CD4-positive, alpha-beta memory T cell (primary cell): ENCODE measurements at regions of chr10 and their contacts with region 1.

Region 1: DNA sequence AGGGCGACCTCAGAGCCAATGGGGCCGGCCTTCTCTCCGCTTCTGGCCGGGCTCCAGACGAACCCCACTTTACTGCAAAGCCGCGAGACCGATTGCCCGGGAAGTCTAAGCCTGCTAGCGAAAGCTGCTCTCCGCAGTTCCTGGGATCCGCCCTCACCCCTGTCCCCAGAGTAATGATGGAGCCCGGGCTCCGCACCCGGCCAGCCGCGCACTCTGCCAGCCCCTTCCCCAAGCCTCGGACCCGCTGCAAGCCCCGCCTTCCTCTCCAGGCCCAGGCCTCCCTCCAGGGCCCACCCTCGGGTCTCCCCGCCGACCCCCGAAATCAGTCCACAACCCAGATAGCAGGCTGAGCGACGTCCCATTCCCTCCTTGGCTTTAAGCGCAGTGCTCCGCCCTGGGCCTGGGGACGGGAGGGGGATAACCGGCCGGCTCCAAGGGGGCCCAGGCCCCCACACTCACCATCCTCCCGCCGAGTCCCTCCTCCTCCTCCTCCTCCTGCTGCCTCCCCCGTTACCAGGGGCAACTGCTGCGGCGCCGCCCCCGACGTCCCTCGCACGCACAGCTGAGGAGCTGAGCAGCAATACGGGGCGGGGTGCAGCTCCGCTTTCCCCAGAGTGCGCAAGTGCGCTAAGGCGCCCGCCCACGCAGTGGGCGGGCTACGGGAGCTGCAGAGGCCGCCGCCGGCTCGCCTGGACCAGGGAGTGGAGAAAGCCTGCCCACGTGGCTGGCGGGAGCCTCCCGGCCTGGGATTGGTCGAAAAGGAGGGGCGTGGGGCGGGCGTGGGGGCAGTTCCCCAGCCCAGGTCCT is at the start of gene ARL3:
- DNase-seq: peak; percentile 89 to 97 (median 92)
- H3K4me3 ChIP-seq: peak within 1 kb of the TSS; percentile 81 to 89
- H3K4me3 Mint-ChIP-seq: peak within 1 kb of the TSS; percentile 90 to 98 (median 96)
- H3K27ac ChIP-seq: peak within 1 kb of the TSS; percentile 94
- H3K27ac Mint-ChIP-seq: peak within 1 kb of the TSS; percentile 90 to 98 (median 96)
- H3K4me1 ChIP-seq: peaks cover 33% of the 10 kb centered on the region
- H3K4me1 Mint-ChIP-seq: peaks cover 34 to 67% (median 41%) of the 10 kb centered on the region in 4 donors
- H3K27me3 ChIP-seq: no peaks in the 10 kb centered on the region
- H3K27me3 Mint-ChIP-seq: no peaks in the 10 kb centered on the region
- total RNA-seq, gene ARL3: 3.7 to 4.0 TPM

Region 2: DNA sequence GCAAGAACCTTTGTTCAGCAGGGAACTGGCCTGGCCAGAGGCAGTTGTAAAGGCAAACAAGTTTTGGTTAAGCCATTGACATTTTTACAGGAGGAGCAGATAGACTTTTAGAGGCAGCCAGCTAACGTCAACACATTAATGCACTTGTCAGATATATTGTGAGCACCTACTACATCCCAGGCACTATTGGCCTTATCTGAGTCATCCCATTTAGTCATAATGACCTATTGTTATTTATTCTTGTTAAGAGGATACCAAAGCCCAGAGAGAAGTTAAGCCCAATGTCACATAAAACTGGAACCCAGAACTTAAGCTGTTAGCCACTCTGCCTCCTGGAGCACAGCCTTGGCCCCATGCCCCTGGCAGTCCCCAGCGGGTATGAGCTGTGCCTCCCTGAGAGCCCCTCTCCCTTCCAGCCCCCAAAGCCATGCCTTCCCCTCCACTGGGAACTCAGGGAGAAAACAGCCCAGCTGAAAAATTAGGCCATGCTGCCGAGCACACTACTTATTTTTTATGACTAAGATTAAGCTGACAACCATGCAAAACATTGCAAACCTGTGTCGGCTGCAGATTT is 102.4 kb before region 1 on chr10:
- CTCF ChIA-PET with region 1: no interaction called
- POLR2A ChIA-PET with region 1: interaction called, 11 read pairs
- intact Hi-C with region 1: no loop called
- DNase-seq: peak in 1 of 5 donors; percentile 20
- H3K4me3 ChIP-seq: no peak overlapping the region
- H3K4me3 Mint-ChIP-seq: peak overlapping the region in 6 of 8 donors; percentile 30 to 72 (median 42)
- H3K27ac ChIP-seq: peak overlapping the region; percentile 27
- H3K27ac Mint-ChIP-seq: peak overlapping the region; percentile 94 to 99 (median 99)
- H3K4me1 ChIP-seq: peaks cover 44% of the 10 kb centered on the region
- H3K4me1 Mint-ChIP-seq: peaks cover 27 to 54% (median 36%) of the 10 kb centered on the region in 4 donors
- H3K27me3 ChIP-seq: no peaks in the 10 kb centered on the region
- H3K27me3 Mint-ChIP-seq: no peaks in the 10 kb centered on the region

Region 3: DNA sequence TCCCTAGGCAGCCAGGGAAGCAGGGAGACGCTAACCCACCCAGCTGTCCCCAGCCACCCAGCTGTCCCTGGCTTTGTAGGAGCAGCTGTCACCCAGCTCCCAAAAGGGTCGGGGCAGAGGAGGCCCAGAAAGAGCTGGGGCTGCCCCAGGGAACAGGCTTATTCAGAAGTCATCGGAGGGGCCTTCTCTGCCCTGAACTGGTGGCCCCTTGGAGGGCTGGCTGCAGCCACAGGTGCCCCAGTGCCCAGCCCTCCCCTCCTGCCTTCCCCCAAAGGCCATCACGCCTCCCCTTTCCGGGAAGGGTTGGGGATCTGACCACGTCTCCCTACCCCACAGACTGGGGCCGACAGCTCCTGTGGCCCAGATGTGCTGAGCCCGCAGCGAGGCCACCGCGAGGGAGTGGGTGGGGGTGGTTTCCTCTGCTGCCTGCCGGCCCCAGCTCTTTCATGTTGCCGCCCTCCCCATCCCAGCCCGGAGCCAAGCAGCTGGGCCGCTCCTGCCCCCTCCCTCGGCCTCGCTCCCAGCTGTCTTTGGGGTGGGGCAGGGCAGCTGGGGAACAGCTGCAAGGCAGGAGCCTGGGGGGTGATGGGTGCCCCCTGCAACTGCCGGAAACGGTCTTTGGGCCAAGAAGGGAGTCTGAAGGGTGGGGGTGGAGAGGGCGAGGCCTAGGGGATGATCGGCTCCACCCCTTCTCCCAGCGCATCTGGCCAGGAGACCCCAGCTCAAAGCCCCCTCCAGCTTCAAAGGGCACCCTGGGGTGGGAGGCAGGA is 52.9 kb before region 1 on chr10:
- CTCF ChIA-PET with region 1: interaction called, 5 read pairs
- POLR2A ChIA-PET with region 1: interaction called, 23 read pairs
- intact Hi-C with region 1: no loop called
- DNase-seq: peak; percentile 50 to 67 (median 60)
- H3K4me3 ChIP-seq: peak overlapping the region in 1 of 2 donors; percentile 27
- H3K4me3 Mint-ChIP-seq: peak overlapping the region; percentile 42 to 87 (median 60)
- H3K27ac ChIP-seq: peak overlapping the region; percentile 48
- H3K27ac Mint-ChIP-seq: peak overlapping the region; percentile 41 to 94 (median 85)
- H3K4me1 ChIP-seq: peaks cover 45% of the 10 kb centered on the region
- H3K4me1 Mint-ChIP-seq: peaks cover 22 to 49% (median 30%) of the 10 kb centered on the region in 4 donors
- H3K27me3 ChIP-seq: no peaks in the 10 kb centered on the region
- H3K27me3 Mint-ChIP-seq: no peaks in the 10 kb centered on the region

Region 4: DNA sequence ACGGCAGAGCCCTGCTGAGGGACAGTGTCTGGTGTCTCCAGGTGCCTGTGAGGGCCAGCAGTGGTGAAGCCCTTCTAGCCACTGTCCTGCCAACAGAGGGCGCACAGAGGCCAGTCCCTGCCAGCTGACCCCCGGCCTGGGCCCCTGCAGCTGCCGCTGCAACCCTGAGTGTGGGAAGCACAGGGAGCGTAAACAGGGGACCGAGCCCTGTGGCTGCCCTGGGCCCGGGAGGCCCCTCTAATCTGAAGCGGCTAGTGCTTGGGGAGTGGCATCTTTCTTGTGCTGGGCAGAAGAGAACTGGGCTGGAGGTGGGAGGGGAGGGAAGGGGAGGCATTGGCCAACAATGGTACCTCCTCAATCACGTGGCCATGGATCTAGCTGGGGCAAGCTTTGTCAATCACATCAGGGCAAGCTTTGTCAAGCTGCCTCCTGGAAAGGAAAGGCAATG is 35.2 kb before region 1 on chr10:
- CTCF ChIA-PET with region 1: interaction called, 22 read pairs
- POLR2A ChIA-PET with region 1: interaction called, 48 read pairs
- intact Hi-C with region 1: loop called (anchors 1 kb)
- DNase-seq: no peak
- H3K4me3 ChIP-seq: no peak overlapping the region
- H3K4me3 Mint-ChIP-seq: no peak overlapping the region
- H3K27ac ChIP-seq: no peak overlapping the region
- H3K27ac Mint-ChIP-seq: peak overlapping the region in 5 of 7 donors; percentile 25 to 83 (median 64)
- H3K4me1 ChIP-seq: peaks cover 41% of the 10 kb centered on the region
- H3K4me1 Mint-ChIP-seq: peaks cover 23 to 57% (median 46%) of the 10 kb centered on the region in 4 donors
- H3K27me3 ChIP-seq: no peaks in the 10 kb centered on the region
- H3K27me3 Mint-ChIP-seq: no peaks in the 10 kb centered on the region

Region 5: DNA sequence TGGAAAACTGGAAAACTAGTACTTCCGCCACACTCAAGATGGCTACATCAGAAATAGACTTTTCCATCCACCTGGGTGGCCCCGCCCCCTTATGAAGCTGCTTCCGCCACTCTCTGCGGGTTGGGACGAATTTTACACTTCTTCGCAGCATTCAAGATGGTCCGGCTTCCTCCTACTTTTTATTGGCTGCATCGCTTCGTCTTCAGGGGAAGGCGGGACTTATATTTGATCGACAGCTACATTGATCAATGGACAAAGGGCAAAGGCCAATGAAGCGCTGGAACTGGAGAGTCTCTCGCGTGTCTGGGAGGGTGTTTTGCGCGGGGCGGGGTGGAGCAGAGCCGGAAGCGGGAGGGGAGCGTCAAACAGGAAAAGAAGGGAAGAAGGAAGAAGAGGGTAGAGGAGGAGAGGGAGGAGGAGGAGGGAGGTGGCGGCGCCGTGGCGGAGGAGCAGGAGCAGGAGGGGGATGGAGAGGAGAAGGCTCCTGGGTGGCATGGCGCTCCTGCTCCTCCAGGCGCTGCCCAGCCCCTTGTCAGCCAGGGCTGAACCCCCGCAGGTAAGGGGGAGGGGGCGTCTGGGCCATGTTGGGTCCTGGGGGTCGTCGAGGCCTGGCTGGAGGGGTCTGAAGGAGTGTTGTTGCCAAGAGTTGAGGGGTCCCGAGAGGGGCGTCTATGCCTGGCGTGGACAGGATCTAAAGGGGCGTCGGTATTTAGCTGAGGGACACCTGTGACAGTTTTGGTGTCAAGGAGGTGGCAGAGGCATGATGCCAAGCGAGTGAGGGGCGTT is 29.8 kb after region 1 on chr10 and contains the start of gene WBP1L:
- CTCF ChIA-PET with region 1: interaction called, 7 read pairs
- POLR2A ChIA-PET with region 1: interaction called, 50 read pairs
- intact Hi-C with region 1: loop called (anchors 1 kb)
- DNase-seq: peak; percentile 95 to 98 (median 97)
- H3K4me3 ChIP-seq: peak within 1 kb of the TSS; percentile 79 to 96
- H3K4me3 Mint-ChIP-seq: peak within 1 kb of the TSS; percentile 90 to 99 (median 96)
- H3K27ac ChIP-seq: peak within 1 kb of the TSS; percentile 81
- H3K27ac Mint-ChIP-seq: peak within 1 kb of the TSS; percentile 69 to 99 (median 94)
- H3K4me1 ChIP-seq: peaks cover 35% of the 10 kb centered on the region
- H3K4me1 Mint-ChIP-seq: peaks cover 33 to 50% (median 42%) of the 10 kb centered on the region in 4 donors
- H3K27me3 ChIP-seq: no peaks in the 10 kb centered on the region
- H3K27me3 Mint-ChIP-seq: no peaks in the 10 kb centered on the region
- total RNA-seq, gene WBP1L: 39.3 to 41.1 TPM

Region 6: DNA sequence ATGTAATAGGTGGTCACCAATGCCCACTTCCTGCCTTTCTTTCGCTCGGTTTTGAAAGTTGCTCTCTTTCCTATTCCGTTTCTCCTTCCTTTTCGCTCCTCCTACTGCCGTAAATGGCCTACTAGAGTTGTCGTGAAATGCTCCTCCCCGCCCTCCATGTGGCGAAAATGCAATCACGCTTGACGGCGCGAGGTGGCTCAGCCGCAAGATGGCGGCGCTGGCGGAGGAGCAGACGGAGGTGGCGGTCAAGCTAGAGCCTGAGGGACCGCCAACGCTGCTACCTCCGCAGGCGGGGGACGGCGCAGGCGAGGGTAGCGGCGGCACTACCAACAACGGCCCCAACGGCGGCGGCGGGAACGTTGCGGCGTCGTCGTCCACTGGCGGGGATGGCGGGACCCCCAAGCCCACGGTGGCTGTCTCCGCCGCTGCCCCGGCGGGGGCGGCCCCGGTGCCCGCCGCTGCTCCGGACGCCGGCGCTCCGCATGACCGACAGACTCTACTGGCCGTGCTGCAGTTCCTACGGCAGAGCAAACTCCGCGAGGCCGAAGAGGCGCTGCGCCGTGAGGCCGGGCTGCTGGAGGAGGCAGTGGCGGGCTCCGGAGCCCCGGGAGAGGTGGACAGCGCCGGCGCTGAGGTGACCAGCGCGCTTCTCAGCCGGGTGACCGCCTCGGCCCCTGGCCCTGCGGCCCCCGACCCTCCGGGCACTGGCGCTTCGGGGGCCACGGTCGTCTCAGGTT is 653.9 kb after region 1 on chr10 and contains the start of gene TAF5:
- CTCF ChIA-PET with region 1: no interaction called
- POLR2A ChIA-PET with region 1: no interaction called
- intact Hi-C with region 1: loop called (anchors 10 kb)
- DNase-seq: peak; percentile 91 to 93 (median 91)
- H3K4me3 ChIP-seq: peak within 1 kb of the TSS; percentile 52 to 89
- H3K4me3 Mint-ChIP-seq: peak within 1 kb of the TSS; percentile 92 to 98 (median 96)
- H3K27ac ChIP-seq: peak within 1 kb of the TSS; percentile 79
- H3K27ac Mint-ChIP-seq: peak within 1 kb of the TSS; percentile 74 to 98 (median 95)
- H3K4me1 ChIP-seq: peaks cover 22% of the 10 kb centered on the region
- H3K4me1 Mint-ChIP-seq: peaks cover 11 to 25% (median 16%) of the 10 kb centered on the region in 4 donors
- H3K27me3 ChIP-seq: no peaks in the 10 kb centered on the region
- H3K27me3 Mint-ChIP-seq: no peaks in the 10 kb centered on the region
- total RNA-seq, gene TAF5: 7.5 to 7.9 TPM